Activated CD4-positive, alpha-beta memory T cell treated with anti-CD3 and anti-CD28 coated beads, Interleukin-2, amount 10 ng/mL, durations not matched to agents 7 days and 5 days (primary cell): ENCODE measurements at regions of chr17 and their contacts with region 1.

Region 1: GRCh38 chr17:8118769-8119580 is 661 bp upstream of the ALOXE3 start:
- DNase-seq: peak; percentile 86
- H3K4me3 Mint-ChIP-seq: peak overlapping the region; percentile 80
- H3K27ac Mint-ChIP-seq: peak overlapping the region; percentile 89
- H3K4me1 Mint-ChIP-seq: peaks cover 56% of the 10 kb centered on the region
- H3K27me3 Mint-ChIP-seq: peaks cover 60% of the 10 kb centered on the region

Region 2: GRCh38 chr17:8057691-8058114 is 61.3 kb before region 1 on chr17:
- CTCF ChIA-PET with region 1: interaction called, 42 read pairs
- POLR2A ChIA-PET with region 1: no interaction called
- DNase-seq: peak; percentile 54
- H3K4me3 Mint-ChIP-seq: no peak overlapping the region
- H3K27ac Mint-ChIP-seq: no peak overlapping the region
- H3K4me1 Mint-ChIP-seq: peaks cover 27% of the 10 kb centered on the region
- H3K27me3 Mint-ChIP-seq: peaks cover 58% of the 10 kb centered on the region

Region 3: GRCh38 chr17:8079291-8080207 is 39.4 kb before region 1 on chr17:
- CTCF ChIA-PET with region 1: interaction called, 34 read pairs
- POLR2A ChIA-PET with region 1: interaction called, 3 read pairs
- DNase-seq: peak; percentile 80
- H3K4me3 Mint-ChIP-seq: peak overlapping the region; percentile 77
- H3K27ac Mint-ChIP-seq: peak overlapping the region; percentile 54
- H3K4me1 Mint-ChIP-seq: peaks cover 18% of the 10 kb centered on the region
- H3K27me3 Mint-ChIP-seq: peaks cover 18% of the 10 kb centered on the region

Region 4: GRCh38 chr17:8138672-8139371 is 19.8 kb after region 1 on chr17:
- CTCF ChIA-PET with region 1: interaction called, 66 read pairs
- POLR2A ChIA-PET with region 1: interaction called, 13 read pairs
- DNase-seq: peak; percentile 97
- H3K4me3 Mint-ChIP-seq: no peak overlapping the region
- H3K27ac Mint-ChIP-seq: no peak overlapping the region
- H3K4me1 Mint-ChIP-seq: peaks cover 3% of the 10 kb centered on the region
- H3K27me3 Mint-ChIP-seq: peaks cover 3% of the 10 kb centered on the region

Region 5: GRCh38 chr17:8156246-8156992 is 37.4 kb after region 1 on chr17:
- CTCF ChIA-PET with region 1: interaction called, 44 read pairs
- POLR2A ChIA-PET with region 1: interaction called, 20 read pairs
- DNase-seq: peak; percentile 100
- H3K4me3 Mint-ChIP-seq: no peak overlapping the region
- H3K27ac Mint-ChIP-seq: no peak overlapping the region
- H3K4me1 Mint-ChIP-seq: peaks cover 51% of the 10 kb centered on the region
- H3K27me3 Mint-ChIP-seq: no peaks in the 10 kb centered on the region

Region 6: DNA sequence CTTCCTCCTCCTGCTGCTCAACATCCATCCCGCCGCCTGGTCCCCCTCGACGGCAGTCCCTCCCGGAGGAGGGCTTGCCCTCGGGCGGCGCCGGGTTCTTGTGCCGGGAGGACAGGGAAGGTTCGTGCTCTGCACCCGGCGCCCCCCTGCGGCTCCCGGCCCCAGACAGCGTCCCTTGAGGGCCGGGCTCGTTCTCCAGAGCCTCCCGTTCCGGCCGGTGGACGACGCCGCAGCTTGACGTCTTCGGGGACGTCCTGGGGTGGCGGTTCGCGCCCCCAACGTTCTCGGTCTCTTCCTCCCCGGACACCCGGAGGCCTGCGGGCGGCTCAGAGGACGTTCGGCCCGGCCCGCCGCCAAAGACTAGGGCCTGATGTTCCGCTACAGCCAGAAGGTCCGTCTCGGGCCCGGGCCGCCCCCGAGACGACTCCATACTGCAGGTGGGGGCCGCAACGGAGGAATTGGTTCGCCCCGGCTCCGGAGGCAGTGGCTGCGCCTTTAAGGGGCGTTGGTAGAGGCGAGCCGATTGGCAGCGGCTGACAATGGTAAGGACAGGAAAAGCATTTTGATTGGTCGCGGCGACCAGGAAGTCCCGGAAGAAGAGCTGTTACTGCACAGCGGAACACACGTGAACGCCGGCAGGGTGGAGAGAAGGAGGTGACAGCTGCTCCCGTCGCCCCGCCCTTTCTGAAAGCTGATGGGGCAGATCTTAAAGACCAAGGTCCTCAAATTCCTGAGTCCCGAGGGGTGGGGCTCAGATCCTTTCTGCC is 70.9 kb after region 1 on chr17 and contains the start of gene BORCS6:
- CTCF ChIA-PET with region 1: interaction called, 10 read pairs
- POLR2A ChIA-PET with region 1: interaction called, 35 read pairs
- DNase-seq: peak; percentile 97
- H3K4me3 Mint-ChIP-seq: no peak within 1 kb of the TSS
- H3K27ac Mint-ChIP-seq: no peak within 1 kb of the TSS
- H3K4me1 Mint-ChIP-seq: peaks cover 13% of the 10 kb centered on the region
- H3K27me3 Mint-ChIP-seq: no peaks in the 10 kb centered on the region
- total RNA-seq, gene BORCS6: 16.3 to 17.0 TPM

Region 7: GRCh38 chr17:8248751-8249607 is 130.0 kb after region 1 on chr17 and contains the start of gene PFAS:
- CTCF ChIA-PET with region 1: interaction called, 9 read pairs
- POLR2A ChIA-PET with region 1: interaction called, 33 read pairs
- DNase-seq: peak; percentile 96
- H3K4me3 Mint-ChIP-seq: peak within 1 kb of the TSS; percentile 94
- H3K27ac Mint-ChIP-seq: peak within 1 kb of the TSS; percentile 100
- H3K4me1 Mint-ChIP-seq: peaks cover 50% of the 10 kb centered on the region
- H3K27me3 Mint-ChIP-seq: no peaks in the 10 kb centered on the region
- total RNA-seq, gene PFAS: 43.6 to 45.9 TPM

Region 8: DNA sequence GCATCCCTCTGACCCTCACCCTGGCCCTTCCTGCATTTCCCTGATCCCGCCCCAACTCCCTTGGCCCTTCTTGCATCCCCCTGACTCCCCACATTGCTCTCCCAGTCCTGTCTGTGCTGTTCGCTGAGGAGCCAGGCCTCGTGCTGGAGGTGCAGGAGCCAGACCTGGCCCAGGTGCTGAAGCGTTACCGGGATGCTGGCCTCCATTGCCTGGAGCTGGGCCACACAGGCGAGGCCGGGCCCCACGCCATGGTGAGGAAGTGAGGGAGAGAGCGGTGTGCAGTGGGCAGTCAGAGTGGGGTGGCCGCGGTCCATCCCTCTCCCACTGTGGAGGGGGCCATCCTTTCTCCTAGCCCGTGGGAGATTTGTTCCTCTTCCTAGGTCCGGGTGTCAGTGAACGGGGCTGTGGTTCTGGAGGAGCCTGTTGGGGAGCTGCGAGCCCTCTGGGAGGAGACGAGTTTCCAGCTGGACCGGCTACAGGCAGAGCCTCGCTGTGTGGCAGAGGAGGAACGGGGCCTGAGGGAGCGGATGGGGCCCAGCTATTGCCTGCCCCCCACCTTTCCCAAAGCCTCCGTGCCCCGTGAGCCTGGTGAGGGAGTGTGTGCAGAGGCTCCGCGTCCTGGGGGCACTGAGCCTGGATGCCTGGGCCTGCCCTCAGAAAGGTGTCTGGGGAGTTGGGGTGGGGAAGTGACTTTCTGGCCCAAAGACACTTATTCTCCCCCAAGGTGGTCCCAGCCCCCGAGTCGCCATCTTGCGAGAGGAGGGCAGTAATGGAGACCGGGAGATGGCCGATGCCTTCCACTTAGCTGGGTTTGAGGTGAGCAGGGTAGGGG is 147.9 kb after region 1 on chr17:
- CTCF ChIA-PET with region 1: no interaction called
- POLR2A ChIA-PET with region 1: no interaction called
- DNase-seq: no peak
- H3K4me3 Mint-ChIP-seq: no peak overlapping the region
- H3K27ac Mint-ChIP-seq: no peak overlapping the region
- H3K4me1 Mint-ChIP-seq: no peaks in the 10 kb centered on the region
- H3K27me3 Mint-ChIP-seq: no peaks in the 10 kb centered on the region